ENCODE measurements at regions of chr22 and their contacts with region 1.

Region 1: DNA sequence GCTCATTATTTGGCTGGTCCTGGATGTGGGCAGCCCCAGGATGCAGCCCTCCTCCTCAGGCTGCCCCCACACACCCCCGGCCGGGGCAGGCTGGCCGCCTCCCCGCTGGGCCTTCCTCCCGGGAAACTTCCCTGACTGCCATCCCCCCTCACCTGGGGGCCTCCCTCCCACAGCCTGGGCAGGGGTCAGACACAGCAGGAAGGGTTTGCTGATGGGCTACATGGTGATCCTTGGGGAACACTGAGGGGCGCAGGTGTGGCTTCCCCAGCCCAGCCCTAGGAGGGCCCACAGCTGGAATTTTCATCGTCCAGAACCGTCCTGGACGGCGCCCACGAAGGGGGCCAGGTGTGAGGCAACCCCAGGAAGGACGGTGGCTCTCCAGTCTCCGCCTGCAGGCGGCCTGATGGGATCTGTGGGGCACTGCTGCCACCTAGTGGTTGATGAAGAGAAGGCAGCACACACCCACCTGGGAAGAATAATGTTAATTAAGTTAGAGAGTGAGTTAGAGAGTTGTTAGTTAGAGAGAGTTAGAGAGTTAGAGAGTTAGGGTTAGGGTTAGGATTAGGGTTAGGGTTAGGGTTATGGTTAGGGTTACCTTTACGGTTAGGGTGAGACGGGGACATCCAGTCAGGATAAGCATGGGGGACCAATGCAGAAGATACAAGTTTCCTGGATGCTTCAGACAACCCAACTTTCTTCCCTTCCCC is 75.9 kb upstream of the PRR5 start:
- DNase-seq: peak; percentile 62 to 84 (median 75)
- ATAC-seq: peak; percentile 94
- H3K4me3 ChIP-seq: no peak overlapping the region
- H3K4me3 Mint-ChIP-seq: no peak overlapping the region
- H3K27ac ChIP-seq: no peak overlapping the region
- H3K27ac Mint-ChIP-seq: peak overlapping the region in 4 of 9 donors; percentile 1 to 28 (median 11)
- H3K4me1 ChIP-seq: no peaks in the 10 kb centered on the region
- H3K4me1 Mint-ChIP-seq: peaks cover 0 to 12% (median 5%) of the 10 kb centered on the region in 7 donors
- H3K27me3 ChIP-seq: no peaks in the 10 kb centered on the region
- H3K27me3 Mint-ChIP-seq: peaks cover 0 to 6% (median 0%) of the 10 kb centered on the region in 5 donors

Region 2: DNA sequence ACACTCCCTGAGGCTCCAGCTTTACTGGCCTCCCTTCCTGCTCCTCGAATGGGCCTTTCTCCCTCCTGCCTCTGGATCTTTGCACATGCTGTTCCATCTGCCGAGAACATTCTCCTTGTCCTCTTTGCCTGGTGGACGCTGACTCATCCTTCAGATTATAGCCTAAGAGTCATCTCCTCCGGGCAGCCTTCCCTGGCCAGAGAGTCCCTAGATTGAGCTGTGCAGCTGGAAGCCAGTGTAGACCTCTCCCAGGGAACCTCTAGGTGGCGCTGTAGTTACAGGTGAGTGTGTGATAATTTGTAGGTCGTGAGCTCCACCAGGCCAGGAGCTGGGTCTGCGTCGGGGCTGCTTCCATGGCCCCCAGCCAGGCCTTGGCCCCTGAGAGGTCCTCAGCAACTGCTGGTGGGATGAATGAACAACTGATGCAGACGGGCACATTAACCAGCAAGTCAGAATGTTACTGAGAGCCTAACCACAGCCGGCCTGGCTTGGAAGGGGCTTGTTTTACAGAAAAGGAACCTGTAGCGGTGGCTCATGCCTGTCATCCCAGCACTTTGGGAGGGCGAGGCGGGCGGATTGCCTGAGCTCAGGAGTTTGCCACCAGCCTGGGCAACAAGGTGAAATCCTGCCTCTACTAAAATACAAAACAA is 743.0 kb before region 1 on chr22:
- CTCF ChIA-PET with region 1: no interaction called
- POLR2A ChIA-PET with region 1: no interaction called
- intact Hi-C with region 1: loop called (anchors 2 kb)
- DNase-seq: peak in 7 of 9 donors; percentile 25 to 54 (median 28)
- ATAC-seq: peak; percentile 53
- H3K4me3 ChIP-seq: no peak overlapping the region
- H3K4me3 Mint-ChIP-seq: no peak overlapping the region
- H3K27ac ChIP-seq: no peak overlapping the region
- H3K27ac Mint-ChIP-seq: no peak overlapping the region
- H3K4me1 ChIP-seq: no peaks in the 10 kb centered on the region
- H3K4me1 Mint-ChIP-seq: peaks cover 0 to 4% (median 0%) of the 10 kb centered on the region in 7 donors
- H3K27me3 ChIP-seq: peaks cover 0 to 3% of the 10 kb centered on the region in 2 donors
- H3K27me3 Mint-ChIP-seq: peaks cover 3 to 44% (median 24%) of the 10 kb centered on the region in 5 donors

Region 3: DNA sequence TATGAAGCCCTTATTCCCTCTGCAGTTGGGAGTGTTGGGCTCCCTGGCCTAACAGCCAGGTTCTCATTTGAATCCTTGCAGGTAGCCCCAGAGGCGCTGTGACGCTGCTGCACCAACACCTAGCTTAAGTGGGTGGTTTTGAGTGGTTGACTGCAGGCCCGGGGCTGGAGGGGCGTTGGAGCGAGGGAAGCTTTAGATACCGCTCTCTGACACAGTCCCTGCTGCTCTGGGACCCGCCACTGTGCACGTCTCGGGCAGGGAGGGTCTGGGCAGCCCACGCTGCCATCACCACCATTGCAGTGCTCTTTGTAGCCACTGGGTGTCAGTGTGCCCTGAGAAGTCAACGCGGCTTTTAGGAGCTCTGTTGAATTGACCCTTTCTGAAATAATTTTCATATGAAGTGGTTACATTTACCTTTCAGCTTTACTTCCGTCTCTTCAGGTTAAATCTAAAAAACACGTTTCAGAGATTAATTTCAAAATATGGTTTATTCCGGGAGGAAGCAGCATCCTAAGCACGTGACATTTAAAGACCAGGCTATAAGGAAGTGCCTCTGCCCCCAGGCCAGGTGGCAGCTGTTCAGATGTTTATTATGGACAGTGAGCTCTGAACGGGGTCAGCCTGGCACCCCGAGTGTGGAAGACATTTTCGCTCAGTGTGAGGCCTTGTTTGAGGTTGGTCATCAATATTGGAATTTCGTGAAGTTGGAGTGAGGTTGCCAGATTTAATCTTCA is 632.9 kb before region 1 on chr22:
- CTCF ChIA-PET with region 1: interaction called, 31 read pairs
- POLR2A ChIA-PET with region 1: no interaction called
- intact Hi-C with region 1: loop called (anchors 1 kb)
- DNase-seq: peak; percentile 14 to 60 (median 52)
- ATAC-seq: peak; percentile 84
- H3K4me3 ChIP-seq: no peak overlapping the region
- H3K4me3 Mint-ChIP-seq: peak overlapping the region in 2 of 10 donors; percentile 42 to 54
- H3K27ac ChIP-seq: no peak overlapping the region
- H3K27ac Mint-ChIP-seq: peak overlapping the region in 7 of 9 donors; percentile 22 to 93 (median 68)
- H3K4me1 ChIP-seq: peaks cover 0 to 6% of the 10 kb centered on the region in 2 donors
- H3K4me1 Mint-ChIP-seq: peaks cover 26 to 42% (median 33%) of the 10 kb centered on the region in 7 donors
- H3K27me3 ChIP-seq: no peaks in the 10 kb centered on the region
- H3K27me3 Mint-ChIP-seq: no peaks in the 10 kb centered on the region

Region 4: DNA sequence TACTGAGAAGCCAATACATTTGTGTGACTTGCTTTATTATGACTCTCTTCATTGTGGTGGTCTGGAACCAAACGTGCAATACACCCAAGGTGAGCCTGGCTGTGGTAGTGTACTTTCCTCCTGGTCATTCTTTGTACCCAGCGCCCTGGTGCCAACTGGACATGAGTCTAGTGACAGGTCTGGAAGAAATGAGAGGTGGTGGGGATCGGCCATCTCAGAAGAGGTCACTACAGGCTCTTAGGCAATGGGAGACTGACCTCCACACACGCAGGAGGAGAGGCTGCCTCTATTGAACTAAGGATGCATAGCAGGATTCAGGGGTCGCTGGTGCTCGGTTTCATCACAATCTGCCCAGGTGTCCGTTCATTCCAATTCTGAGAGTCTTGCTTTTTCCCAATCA is 71.7 kb before region 1 on chr22:
- CTCF ChIA-PET with region 1: no interaction called
- POLR2A ChIA-PET with region 1: no interaction called
- intact Hi-C with region 1: no loop called
- DNase-seq: no peak
- ATAC-seq: no peak
- H3K4me3 ChIP-seq: no peak overlapping the region
- H3K4me3 Mint-ChIP-seq: no peak overlapping the region
- H3K27ac ChIP-seq: no peak overlapping the region
- H3K27ac Mint-ChIP-seq: no peak overlapping the region
- H3K4me1 ChIP-seq: peaks cover 0 to 6% of the 10 kb centered on the region in 2 donors
- H3K4me1 Mint-ChIP-seq: peaks cover 0 to 7% (median 0%) of the 10 kb centered on the region in 7 donors
- H3K27me3 ChIP-seq: no peaks in the 10 kb centered on the region
- H3K27me3 Mint-ChIP-seq: peaks cover 4 to 27% (median 10%) of the 10 kb centered on the region in 5 donors

Region 5: GRCh38 chr22:44669561-44669976 is 43.4 kb after region 1 on chr22:
- CTCF ChIA-PET with region 1: interaction called, 3 read pairs
- POLR2A ChIA-PET with region 1: no interaction called
- intact Hi-C with region 1: loop called (anchors 2 kb)
- DNase-seq: no peak
- ATAC-seq: no peak
- H3K4me3 ChIP-seq: peak overlapping the region; percentile 54
- H3K4me3 Mint-ChIP-seq: peak overlapping the region; percentile 42 to 86 (median 78)
- H3K27ac ChIP-seq: peak overlapping the region; percentile 50
- H3K27ac Mint-ChIP-seq: peak overlapping the region in 6 of 9 donors; percentile 21 to 83 (median 44)
- H3K4me1 ChIP-seq: peaks cover 37 to 46% of the 10 kb centered on the region in 2 donors
- H3K4me1 Mint-ChIP-seq: peaks cover 28 to 61% (median 49%) of the 10 kb centered on the region in 7 donors
- H3K27me3 ChIP-seq: no peaks in the 10 kb centered on the region
- H3K27me3 Mint-ChIP-seq: peaks cover 0 to 19% (median 0%) of the 10 kb centered on the region in 5 donors